K562 (cell line): ENCODE measurements at regions of chr6 and their contacts with region 1.

Region 1: DNA sequence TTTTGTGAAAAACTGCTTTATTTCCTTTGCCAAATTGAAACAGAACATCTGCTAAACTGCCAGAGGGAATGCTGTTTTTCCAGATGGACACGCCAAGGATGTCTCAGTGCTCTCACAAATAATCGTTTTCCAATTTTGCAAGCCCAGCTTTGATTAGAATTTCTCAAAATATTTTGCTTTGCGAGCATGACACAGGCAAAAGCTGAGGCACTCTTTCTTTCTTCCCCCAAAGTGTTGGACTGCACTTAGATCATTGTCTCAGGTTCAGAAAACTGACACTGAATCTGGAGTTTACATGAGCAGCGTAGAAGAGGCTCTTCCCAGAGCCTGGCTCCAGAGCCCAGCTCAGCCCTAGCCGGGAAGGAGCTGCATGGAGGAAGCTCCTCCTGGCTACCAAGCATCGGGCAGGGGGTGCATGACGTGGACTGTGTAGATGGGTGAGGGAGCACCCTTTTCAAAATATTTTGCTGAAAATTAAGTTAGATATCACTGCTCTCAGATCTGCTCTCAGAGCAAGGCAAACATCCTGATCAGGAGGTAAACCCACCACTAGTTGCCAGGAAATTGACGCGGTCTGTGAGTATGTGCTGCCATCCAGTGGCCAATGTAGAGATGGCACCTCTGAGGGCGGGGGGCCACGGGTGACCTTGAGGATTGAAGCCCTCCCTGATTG is 107.5 kb downstream of the SLC22A3 start:
- DNase-seq: peak; percentile 69 to 84 (median 81)
- ATAC-seq: peak; percentile 94
- H3K4me3 ChIP-seq: no peak overlapping the region
- H3K27ac ChIP-seq: no peak overlapping the region
- H3K4me1 ChIP-seq: no peaks in the 10 kb centered on the region
- H3K27me3 ChIP-seq: peaks cover 10 to 18% of the 10 kb centered on the region in 2 experiments
- CTCF ChIP-seq: peak; percentile 92 to 97 (median 96)
- EP300 ChIP-seq: no peak
- POLR2A ChIP-seq: no peak
- RAD21 ChIP-seq: peak; percentile 97

Region 2: GRCh38 chr6:160088069-160088783 is 367.5 kb before region 1 on chr6:
- CTCF ChIA-PET with region 1: interaction called, 3 read pairs
- POLR2A ChIA-PET with region 1: no interaction called
- in situ Hi-C with region 1: no loop called
- intact Hi-C with region 1: loop called (anchors 5 kb)
- DNase-seq: peak; percentile 43 to 52 (median 46)
- ATAC-seq: peak; percentile 70
- H3K4me3 ChIP-seq: no peak overlapping the region
- H3K27ac ChIP-seq: no peak overlapping the region
- H3K4me1 ChIP-seq: no peaks in the 10 kb centered on the region
- H3K27me3 ChIP-seq: no peaks in the 10 kb centered on the region
- CTCF ChIP-seq: peak; percentile 54 to 75 (median 71)
- EP300 ChIP-seq: no peak
- POLR2A ChIP-seq: no peak
- RAD21 ChIP-seq: peak; percentile 37 to 66

Region 3: DNA sequence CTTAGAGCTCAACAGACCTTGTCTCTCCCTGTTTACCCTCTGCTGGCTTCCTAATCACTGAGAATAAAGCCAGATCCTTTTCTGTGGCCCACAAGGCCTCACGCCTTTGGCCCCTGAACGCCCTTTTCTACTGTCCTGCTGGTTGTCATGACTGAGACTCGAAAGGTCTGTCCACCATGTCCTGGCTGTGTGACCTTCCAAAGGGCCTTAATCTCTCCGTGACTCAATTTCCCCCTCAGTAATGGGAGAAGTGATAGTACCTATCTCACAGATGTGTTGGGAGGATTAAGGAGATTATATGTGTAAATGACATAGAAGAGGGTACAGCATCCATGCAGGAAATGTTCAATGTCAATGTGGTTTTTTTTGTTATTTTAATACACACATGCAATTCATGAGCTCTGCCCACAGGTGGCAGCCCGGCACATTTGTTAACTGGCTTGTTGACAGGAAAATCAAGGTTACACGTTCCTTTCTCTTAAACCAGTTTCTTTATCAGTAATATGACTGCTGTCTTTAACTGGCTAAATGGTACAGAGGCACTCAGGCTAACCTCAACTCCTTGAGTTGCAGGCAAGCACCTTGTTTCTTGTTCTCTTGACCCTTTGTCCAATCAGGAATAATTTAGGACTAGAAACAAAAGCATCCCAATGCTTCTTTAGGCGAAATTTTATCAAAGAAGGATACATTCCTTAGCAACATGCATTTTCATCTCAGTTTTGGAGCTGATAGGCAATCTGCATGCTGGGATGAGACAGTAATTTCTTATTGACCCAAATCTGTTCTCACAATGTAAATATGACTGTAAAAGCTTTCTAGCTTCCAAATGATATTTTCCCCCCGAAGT is 317.5 kb before region 1 on chr6:
- CTCF ChIA-PET with region 1: interaction called, 18 read pairs
- POLR2A ChIA-PET with region 1: no interaction called
- in situ Hi-C with region 1: loop called (anchors 5 kb)
- intact Hi-C with region 1: loop called (anchors 1 kb)
- DNase-seq: peak; percentile 60 to 73 (median 64)
- ATAC-seq: peak; percentile 69
- H3K4me3 ChIP-seq: no peak overlapping the region
- H3K27ac ChIP-seq: no peak overlapping the region
- H3K4me1 ChIP-seq: peaks cover 0 to 7% of the 10 kb centered on the region in 2 experiments; a peak in 1 of 5 replicates
- H3K27me3 ChIP-seq: peaks cover 27 to 57% of the 10 kb centered on the region in 2 experiments
- CTCF ChIP-seq: peak; percentile 74 to 94 (median 85)
- EP300 ChIP-seq: no peak
- POLR2A ChIP-seq: no peak
- RAD21 ChIP-seq: peak; percentile 89 to 93

Region 4: DNA sequence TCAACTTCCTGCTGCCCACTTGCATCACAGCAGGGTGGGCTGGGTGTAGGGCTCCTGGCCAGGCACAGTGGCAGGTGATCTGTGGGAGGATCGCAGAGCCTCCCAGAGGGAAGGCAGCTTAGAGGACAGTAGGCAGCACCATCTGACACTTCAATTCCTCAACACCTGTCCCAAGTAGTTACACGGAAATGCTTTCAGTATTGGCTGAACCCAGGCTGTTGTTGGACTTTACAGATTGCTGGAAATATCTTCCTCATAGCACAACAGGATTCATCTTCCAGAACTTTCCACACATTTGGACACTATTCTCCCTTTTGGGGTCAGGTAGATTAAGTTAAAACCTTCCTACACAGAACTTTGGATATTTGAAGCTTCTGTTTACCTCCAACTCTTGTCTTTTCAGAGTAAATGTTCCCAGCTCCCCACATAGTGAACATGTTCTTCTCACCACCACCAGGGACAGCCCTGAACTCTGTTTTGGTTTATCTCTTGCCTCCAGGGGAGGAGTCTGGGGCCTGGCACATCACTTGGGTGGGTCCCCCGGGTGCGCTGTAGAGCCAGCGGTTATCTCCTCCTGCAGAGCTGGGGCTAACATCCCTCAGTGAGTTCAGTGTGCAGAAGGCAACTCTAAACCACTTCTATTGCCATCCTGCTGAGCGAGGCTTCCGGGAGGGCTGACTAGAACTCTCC is 193.5 kb before region 1 on chr6:
- CTCF ChIA-PET with region 1: no interaction called
- POLR2A ChIA-PET with region 1: no interaction called
- in situ Hi-C with region 1: no loop called
- intact Hi-C with region 1: loop called (anchors 10 kb)
- DNase-seq: peak; percentile 46 to 70 (median 56)
- ATAC-seq: peak; percentile 96
- H3K4me3 ChIP-seq: no peak overlapping the region
- H3K27ac ChIP-seq: no peak overlapping the region
- H3K4me1 ChIP-seq: peaks cover 0 to 6% of the 10 kb centered on the region in 2 experiments; a peak in 2 of 5 replicates
- H3K27me3 ChIP-seq: peaks cover 23 to 41% of the 10 kb centered on the region in 2 experiments
- CTCF ChIP-seq: peak; percentile 48 to 53 (median 53); a peak in 5 of 6 replicates
- EP300 ChIP-seq: no peak
- POLR2A ChIP-seq: no peak
- RAD21 ChIP-seq: peak; percentile 24 to 28; a peak in 1 of 4 replicates

Region 5: GRCh38 chr6:160534050-160534696 is 78.5 kb after region 1 on chr6:
- CTCF ChIA-PET with region 1: no interaction called
- POLR2A ChIA-PET with region 1: no interaction called
- in situ Hi-C with region 1: no loop called
- intact Hi-C with region 1: loop called (anchors 1 kb)
- DNase-seq: peak; percentile 68 to 76 (median 70)
- ATAC-seq: peak; percentile 93
- H3K4me3 ChIP-seq: no peak overlapping the region
- H3K27ac ChIP-seq: no peak overlapping the region
- H3K4me1 ChIP-seq: no peaks in the 10 kb centered on the region
- H3K27me3 ChIP-seq: peaks cover 2 to 10% of the 10 kb centered on the region in 2 experiments; a peak in 3 of 5 replicates
- CTCF ChIP-seq: peak; percentile 79 to 94 (median 83)
- EP300 ChIP-seq: no peak
- POLR2A ChIP-seq: no peak
- RAD21 ChIP-seq: peak; percentile 89 to 94